Mammary epithelial cell (primary cell): ENCODE measurements at regions of chr20 and their contacts with region 1.

Region 1: GRCh38 chr20:56554869-56555268 is 21.8 kb downstream of the FAM209B start:
- DNase-seq: peak; percentile 95
- H3K4me3 ChIP-seq: no peak overlapping the region
- H3K27ac ChIP-seq: no peak overlapping the region
- H3K4me1 ChIP-seq: peaks cover 17% of the 10 kb centered on the region
- H3K27me3 ChIP-seq: no peaks in the 10 kb centered on the region
- CTCF ChIP-seq: peak; percentile 16 to 21

Region 2: GRCh38 chr20:56574531-56575142 is 19.8 kb after region 1 on chr20:
- CTCF ChIA-PET with region 1: interaction called, 5 read pairs
- dilution Hi-C with region 1: no loop called
- in situ Hi-C with region 1: no loop called
- intact Hi-C with region 1: loop called (anchors 1 kb)
- DNase-seq: peak; percentile 35
- H3K4me3 ChIP-seq: no peak overlapping the region
- H3K27ac ChIP-seq: no peak overlapping the region
- H3K4me1 ChIP-seq: peaks cover 13% of the 10 kb centered on the region
- H3K27me3 ChIP-seq: no peaks in the 10 kb centered on the region
- CTCF ChIP-seq: no peak

Region 3: GRCh38 chr20:56974499-56975236 is 419.8 kb after region 1 on chr20:
- CTCF ChIA-PET with region 1: interaction called, 11 read pairs
- dilution Hi-C with region 1: no loop called
- in situ Hi-C with region 1: loop called (anchors 5 to 10 kb)
- intact Hi-C with region 1: loop called (anchors 1 kb)
- DNase-seq: peak; percentile 55
- H3K4me3 ChIP-seq: no peak overlapping the region
- H3K27ac ChIP-seq: no peak overlapping the region
- H3K4me1 ChIP-seq: no peaks in the 10 kb centered on the region
- H3K27me3 ChIP-seq: peaks cover 3% of the 10 kb centered on the region
- CTCF ChIP-seq: peak; percentile 86

Region 4: GRCh38 chr20:57061058-57061900 is 506.4 kb after region 1 on chr20:
- CTCF ChIA-PET with region 1: interaction called, 3 read pairs
- dilution Hi-C with region 1: no loop called
- in situ Hi-C with region 1: loop called in 1 of 2 experiments (anchors 10 kb)
- intact Hi-C with region 1: loop called (anchors 5 kb)
- DNase-seq: peak; percentile 21
- H3K4me3 ChIP-seq: no peak overlapping the region
- H3K27ac ChIP-seq: peak overlapping the region; percentile 49
- H3K4me1 ChIP-seq: peaks cover 14% of the 10 kb centered on the region
- H3K27me3 ChIP-seq: no peaks in the 10 kb centered on the region
- CTCF ChIP-seq: peak; percentile 17 to 47

Region 5: DNA sequence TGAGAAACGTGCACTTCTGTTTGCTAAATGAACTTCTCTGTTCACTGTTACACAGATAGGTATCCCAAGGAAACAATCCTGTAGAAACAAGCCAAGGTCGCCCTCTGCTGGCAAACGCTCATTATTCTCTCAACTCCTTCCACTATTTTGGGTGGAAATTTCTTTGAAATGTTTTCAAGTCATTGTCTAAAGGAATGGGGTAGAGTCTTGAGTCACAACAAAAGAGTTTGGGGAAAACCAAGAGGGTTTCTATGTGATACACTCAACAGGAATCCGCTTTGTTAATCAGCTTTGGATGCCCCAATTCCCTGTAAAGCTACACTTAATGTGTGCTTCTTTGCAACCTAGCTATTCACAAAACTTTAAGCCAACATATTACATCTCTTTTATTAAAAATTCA is 791.6 kb after region 1 on chr20:
- CTCF ChIA-PET with region 1: no interaction called
- dilution Hi-C with region 1: no loop called
- in situ Hi-C with region 1: loop called (anchors 25 kb)
- intact Hi-C with region 1: loop called (anchors 5 kb)
- DNase-seq: peak; percentile 75
- H3K4me3 ChIP-seq: no peak overlapping the region
- H3K27ac ChIP-seq: no peak overlapping the region
- H3K4me1 ChIP-seq: peaks cover 4% of the 10 kb centered on the region
- H3K27me3 ChIP-seq: no peaks in the 10 kb centered on the region
- CTCF ChIP-seq: peak; percentile 75 to 76